Dorsolateral prefrontal cortex (tissue), 120 donors: ENCODE measurements at regions of chr20 and their contacts with region 1.

Region 1: GRCh38 chr20:37265152-37265551 is 3.5 kb upstream of the GHRH start:
- DNase-seq: no peak
- H3K4me3 ChIP-seq: no peak overlapping the region
- H3K27ac ChIP-seq: no peak overlapping the region
- H3K27me3 ChIP-seq: peaks cover 0 to 4% (median 0%) of the 10 kb centered on the region in 45 donors
- CTCF ChIP-seq: no peak

Region 2: DNA sequence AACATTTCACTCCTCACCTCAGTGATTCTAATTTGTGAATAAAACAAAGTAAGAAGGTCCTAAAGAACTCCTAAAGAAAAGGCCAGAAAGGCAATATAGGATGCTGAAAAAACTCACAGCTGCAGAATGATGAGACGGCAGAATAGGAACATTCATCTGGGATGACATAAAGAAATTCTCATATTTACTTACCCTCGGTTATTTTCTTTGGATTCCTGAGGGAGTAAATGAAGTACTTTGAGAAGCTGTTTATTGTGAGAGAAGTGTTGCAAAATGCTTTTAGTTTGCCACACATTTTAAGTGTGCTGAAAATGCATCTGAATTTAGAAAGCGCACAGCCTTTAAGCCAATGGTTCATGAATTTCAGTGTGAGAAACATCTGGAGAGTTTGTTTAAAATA is 133.7 kb before region 1 on chr20:
- intact Hi-C with region 1: no loop called
- DNase-seq: no peak
- H3K4me3 ChIP-seq: no peak overlapping the region
- H3K27ac ChIP-seq: no peak overlapping the region
- H3K27me3 ChIP-seq: no peaks in the 10 kb centered on the region
- CTCF ChIP-seq: no peak

Region 3: DNA sequence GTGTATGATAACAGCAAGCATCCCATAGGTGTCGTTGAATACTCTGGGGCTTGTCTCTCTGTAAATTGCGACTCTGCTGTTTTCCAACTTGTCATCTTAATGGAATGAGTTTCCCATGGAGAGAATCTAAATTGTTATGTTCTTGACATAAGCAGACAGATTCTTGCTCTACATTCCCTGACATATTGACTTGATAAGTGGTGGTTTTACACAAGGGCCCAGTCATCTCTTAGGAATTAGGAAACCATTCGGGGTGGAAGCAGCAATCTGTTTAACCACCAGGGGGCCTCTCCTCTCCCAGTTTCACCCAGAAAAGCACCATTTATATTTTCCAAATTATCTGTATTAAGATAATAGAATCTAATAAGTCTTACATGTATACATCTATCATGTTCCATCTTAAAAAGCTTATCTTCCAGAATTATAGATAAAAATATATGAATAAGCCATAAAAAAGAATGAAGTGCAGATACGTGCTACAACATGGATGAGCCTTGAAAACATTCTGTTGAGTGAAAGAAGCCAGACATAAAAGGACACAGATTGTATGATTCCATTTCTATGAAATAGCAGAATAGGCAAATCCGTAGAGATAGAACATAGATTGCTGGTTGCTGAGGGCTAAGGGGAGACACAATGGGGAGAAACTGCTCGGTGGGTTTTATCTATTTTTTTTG is 62.7 kb before region 1 on chr20:
- intact Hi-C with region 1: loop called in 1 of 2 experiments (anchors 5 kb)
- DNase-seq: no peak
- H3K4me3 ChIP-seq: no peak overlapping the region
- H3K27ac ChIP-seq: no peak overlapping the region
- H3K27me3 ChIP-seq: no peaks in the 10 kb centered on the region
- CTCF ChIP-seq: peak; percentile 45 to 86 (median 71)